Esophagus squamous epithelium (tissue), 5 donors: ENCODE measurements at regions of chr3 and their contacts with region 1.

Region 1: GRCh38 chr3:20039766-20040475 is at the start of gene KAT2B:
- DNase-seq: peak; percentile 22
- H3K4me3 ChIP-seq: peak within 1 kb of the TSS; percentile 74 to 97 (median 84)
- H3K27ac ChIP-seq: peak within 1 kb of the TSS; percentile 95 to 99 (median 96)
- H3K4me1 ChIP-seq: peaks cover 27 to 51% (median 28%) of the 10 kb centered on the region in 3 donors
- H3K27me3 ChIP-seq: no peaks in the 10 kb centered on the region
- CTCF ChIP-seq: peak; percentile 57 to 75 (median 72)
- POLR2A ChIP-seq: peak in 2 of 4 donors; percentile 51 to 74
- total RNA-seq, gene KAT2B: 20.0 to 27.1 (median 23.8) TPM

Region 2: DNA sequence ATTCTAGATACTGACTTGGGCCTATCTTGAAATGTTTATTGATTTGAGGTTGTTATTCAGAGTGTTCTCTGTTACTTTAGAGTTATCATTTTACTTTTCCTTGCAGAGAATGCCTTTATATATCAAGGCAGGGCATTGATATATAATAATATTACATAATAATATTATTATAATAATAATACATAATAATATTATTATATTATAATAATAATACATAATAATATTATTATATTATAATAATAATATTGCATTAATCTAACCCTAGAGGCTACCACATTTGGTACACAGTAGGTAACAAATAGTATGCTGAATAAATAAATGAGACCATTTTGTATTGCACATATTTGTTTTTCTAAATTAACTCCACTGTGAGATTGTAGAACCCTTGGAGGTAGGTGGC is 322.2 kb before region 1 on chr3:
- intact Hi-C with region 1: no loop called
- DNase-seq: no peak
- H3K4me3 ChIP-seq: no peak overlapping the region
- H3K27ac ChIP-seq: no peak overlapping the region
- H3K4me1 ChIP-seq: no peaks in the 10 kb centered on the region
- H3K27me3 ChIP-seq: no peaks in the 10 kb centered on the region
- CTCF ChIP-seq: no peak
- POLR2A ChIP-seq: no peak

Region 3: GRCh38 chr3:19946832-19947548 is 92.9 kb before region 1 on chr3 and contains the start of gene RAB5A:
- intact Hi-C with region 1: loop called (anchors 2 kb)
- DNase-seq: peak; percentile 94
- H3K4me3 ChIP-seq: peak within 1 kb of the TSS; percentile 61 to 96 (median 88)
- H3K27ac ChIP-seq: peak within 1 kb of the TSS; percentile 94 to 99 (median 99)
- H3K4me1 ChIP-seq: peaks cover 4 to 52% (median 14%) of the 10 kb centered on the region in 3 donors
- H3K27me3 ChIP-seq: no peaks in the 10 kb centered on the region
- CTCF ChIP-seq: peak in 1 of 6 experiments; percentile 12
- POLR2A ChIP-seq: peak in 3 of 4 donors; percentile 28 to 84 (median 76)
- total RNA-seq, gene RAB5A: 80.3 to 102 (median 86.5) TPM

Region 4: GRCh38 chr3:20185701-20186598 is 146.0 kb after region 1 on chr3 and contains the start of gene SGO1:
- intact Hi-C with region 1: loop called (anchors 10 kb)
- DNase-seq: peak; percentile 98
- H3K4me3 ChIP-seq: peak within 1 kb of the TSS; percentile 56 to 74 (median 72)
- H3K27ac ChIP-seq: peak within 1 kb of the TSS; percentile 87 to 96 (median 92)
- H3K4me1 ChIP-seq: peaks cover 0 to 32% (median 8%) of the 10 kb centered on the region in 3 donors
- H3K27me3 ChIP-seq: no peaks in the 10 kb centered on the region
- CTCF ChIP-seq: peak in 2 of 6 experiments; percentile 9
- POLR2A ChIP-seq: peak in 3 of 4 donors; percentile 61 to 82 (median 74)
- total RNA-seq, gene SGO1: 1.3 to 9.8 (median 5.7) TPM